BJ (cell line): ENCODE measurements at regions of chr2 and their contacts with region 1.

Region 1: DNA sequence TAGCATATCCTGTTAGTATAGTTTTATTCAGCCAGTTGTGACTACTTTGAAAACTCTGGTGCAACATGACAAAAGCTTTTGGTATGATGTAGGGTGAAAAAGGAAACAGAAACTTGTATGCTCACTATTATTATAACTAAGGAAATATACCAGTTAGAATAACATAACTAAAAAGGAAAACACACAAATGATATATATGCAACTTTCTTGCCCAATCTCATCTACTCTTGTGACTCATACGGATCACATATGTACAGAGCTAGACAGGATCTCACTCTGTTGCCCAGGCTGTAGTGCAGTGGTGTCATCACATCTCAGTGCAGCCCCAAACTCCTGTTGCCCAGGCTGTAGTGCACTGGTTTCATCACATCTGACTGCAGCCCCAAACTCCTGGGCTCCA is 12.4 kb upstream of the TLK1 start:
- DNase-seq: no peak
- H3K4me3 ChIP-seq: no peak overlapping the region
- H3K27me3 ChIP-seq: no peaks in the 10 kb centered on the region
- CTCF ChIP-seq: no peak

Region 2: DNA sequence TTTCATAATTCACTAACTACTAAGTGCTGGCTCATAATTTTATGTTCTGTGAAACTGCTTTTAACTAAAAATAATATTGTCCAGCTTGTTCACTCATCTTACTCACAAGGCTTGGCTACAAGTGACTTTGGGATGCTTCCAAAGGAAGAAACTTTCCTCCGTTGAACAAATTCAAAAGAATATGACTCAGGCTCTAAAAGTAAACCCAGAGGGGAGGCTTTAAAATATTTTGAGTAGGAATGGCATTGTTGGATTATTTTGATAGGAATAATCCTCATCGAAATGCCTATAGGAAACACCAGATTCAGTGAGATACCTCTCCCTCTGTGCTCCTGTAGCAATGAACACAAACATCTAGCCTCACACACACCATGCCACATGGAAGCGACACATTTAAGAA is 12.9 kb after region 1 on chr2:
- CTCF ChIA-PET with region 1: no interaction called
- POLR2A ChIA-PET with region 1: no interaction called
- DNase-seq: peak; percentile 69
- H3K4me3 ChIP-seq: no peak overlapping the region
- H3K27me3 ChIP-seq: no peaks in the 10 kb centered on the region
- CTCF ChIP-seq: no peak

Region 3: DNA sequence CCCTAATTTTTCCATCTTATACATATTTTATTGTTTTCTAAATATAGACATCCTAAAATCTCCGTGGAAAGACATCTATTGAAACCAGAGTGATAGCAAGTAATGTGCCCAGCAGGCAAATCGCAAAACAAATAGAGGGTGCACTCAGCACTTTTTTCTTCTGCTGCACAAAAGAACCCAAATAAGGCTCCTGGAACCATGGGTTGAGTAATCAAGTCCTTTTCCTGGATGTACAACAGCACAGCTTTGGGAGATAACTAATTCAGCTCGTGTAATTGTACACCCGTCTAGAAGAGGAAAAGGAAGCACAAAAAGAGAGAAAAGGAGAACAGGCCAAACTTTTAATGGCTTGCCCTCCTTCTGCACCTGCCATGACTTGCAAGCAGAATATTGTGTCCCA is 114.5 kb after region 1 on chr2:
- CTCF ChIA-PET with region 1: no interaction called
- POLR2A ChIA-PET with region 1: interaction called, 16 read pairs
- DNase-seq: no peak
- H3K4me3 ChIP-seq: no peak overlapping the region
- H3K27me3 ChIP-seq: no peaks in the 10 kb centered on the region
- CTCF ChIP-seq: no peak

Region 4: DNA sequence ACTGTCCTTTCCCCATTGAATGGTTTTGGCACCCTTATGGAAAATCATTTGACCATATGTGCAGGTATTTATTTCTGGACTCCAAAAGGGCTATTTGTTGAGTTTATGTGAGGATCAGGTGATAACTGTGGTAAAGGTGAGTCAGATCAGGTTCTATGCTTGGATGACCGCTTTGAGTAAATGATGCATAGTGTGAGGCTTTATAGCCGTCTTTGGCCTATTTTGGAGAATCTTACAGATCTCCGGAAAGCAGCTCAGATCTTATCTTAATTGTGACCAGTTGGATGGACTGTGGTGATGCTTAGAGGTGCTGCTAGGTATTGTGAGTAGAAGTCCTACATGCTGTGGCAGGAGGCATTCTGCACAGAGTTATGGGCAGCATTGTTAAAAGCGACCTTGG is 134.5 kb after region 1 on chr2:
- CTCF ChIA-PET with region 1: no interaction called
- POLR2A ChIA-PET with region 1: no interaction called
- DNase-seq: no peak
- H3K4me3 ChIP-seq: no peak overlapping the region
- H3K27me3 ChIP-seq: no peaks in the 10 kb centered on the region
- CTCF ChIP-seq: no peak